Sciatic nerve (tissue), 2 donors: ENCODE measurements at regions of chr6 and their contacts with region 1.

Region 1: DNA sequence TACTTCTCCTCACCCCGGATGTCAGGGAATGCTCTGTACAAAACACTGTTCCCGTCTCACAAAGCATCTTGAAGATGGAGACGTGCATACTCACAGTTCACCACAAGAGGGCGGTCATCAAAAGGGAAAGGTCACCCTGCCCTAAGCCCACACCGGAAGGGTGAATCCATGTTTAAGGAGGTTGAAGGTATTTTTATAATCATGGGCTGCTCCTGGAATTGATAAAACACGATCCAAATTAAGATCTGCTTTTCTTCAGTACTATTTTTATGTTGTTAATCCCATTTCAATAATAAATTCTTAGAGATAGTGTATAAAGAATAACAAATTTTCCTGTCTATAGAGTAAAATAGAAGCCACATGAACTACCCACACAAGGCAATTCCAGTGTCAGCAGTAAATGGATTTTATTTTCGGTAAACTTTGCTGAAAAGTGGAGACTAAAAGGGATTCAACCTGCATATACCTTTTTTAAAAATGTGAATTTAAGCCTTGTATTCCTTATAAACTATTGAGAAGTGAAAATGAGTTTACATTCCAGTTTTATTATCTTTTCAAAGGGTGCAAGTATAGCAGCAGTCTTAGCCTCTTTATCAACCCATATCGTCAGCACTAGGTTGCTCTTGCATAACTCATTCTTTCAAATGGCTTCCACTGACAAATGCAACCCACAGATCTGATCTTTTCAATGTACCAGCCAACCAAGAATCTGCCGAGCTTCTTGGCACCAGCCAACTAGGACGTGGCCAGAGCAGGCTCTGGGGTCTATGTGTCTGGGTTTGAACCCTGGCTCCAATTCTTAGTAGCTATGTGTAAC is 79.7 kb upstream of the MBOAT1 start:
- DNase-seq: peak; percentile 91
- ATAC-seq: peak; percentile 95

Region 2: DNA sequence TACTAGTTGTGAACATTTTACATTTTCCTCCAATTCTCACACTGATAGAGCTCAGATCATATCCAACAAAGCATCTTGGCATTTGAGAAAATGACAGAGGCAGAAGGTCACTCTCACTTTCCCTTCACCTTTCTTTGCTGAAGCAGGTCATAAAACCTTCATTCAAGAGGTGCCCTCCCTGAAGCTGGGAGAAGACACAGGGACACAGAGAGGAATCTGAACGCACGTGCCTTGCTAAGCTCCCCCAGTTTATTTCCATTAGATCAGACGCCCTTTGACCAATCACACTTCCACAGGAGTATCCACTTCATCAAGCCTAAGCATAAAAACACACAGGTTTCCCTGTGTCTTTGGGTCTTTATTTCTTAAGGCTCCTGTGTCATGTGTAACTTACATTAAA is 70.6 kb before region 1 on chr6:
- intact Hi-C with region 1: loop called (anchors 2 kb)
- DNase-seq: no peak
- ATAC-seq: no peak

Region 3: GRCh38 chr6:20534295-20535262 is 242.6 kb after region 1 on chr6 and contains the start of gene CDKAL1:
- intact Hi-C with region 1: loop called (anchors 10 kb)
- DNase-seq: peak; percentile 93
- ATAC-seq: peak; percentile 96
- total RNA-seq, gene CDKAL1: 20.5 TPM